B cell (primary cell): ENCODE measurements at regions of chr11 and their contacts with region 1.

Region 1: DNA sequence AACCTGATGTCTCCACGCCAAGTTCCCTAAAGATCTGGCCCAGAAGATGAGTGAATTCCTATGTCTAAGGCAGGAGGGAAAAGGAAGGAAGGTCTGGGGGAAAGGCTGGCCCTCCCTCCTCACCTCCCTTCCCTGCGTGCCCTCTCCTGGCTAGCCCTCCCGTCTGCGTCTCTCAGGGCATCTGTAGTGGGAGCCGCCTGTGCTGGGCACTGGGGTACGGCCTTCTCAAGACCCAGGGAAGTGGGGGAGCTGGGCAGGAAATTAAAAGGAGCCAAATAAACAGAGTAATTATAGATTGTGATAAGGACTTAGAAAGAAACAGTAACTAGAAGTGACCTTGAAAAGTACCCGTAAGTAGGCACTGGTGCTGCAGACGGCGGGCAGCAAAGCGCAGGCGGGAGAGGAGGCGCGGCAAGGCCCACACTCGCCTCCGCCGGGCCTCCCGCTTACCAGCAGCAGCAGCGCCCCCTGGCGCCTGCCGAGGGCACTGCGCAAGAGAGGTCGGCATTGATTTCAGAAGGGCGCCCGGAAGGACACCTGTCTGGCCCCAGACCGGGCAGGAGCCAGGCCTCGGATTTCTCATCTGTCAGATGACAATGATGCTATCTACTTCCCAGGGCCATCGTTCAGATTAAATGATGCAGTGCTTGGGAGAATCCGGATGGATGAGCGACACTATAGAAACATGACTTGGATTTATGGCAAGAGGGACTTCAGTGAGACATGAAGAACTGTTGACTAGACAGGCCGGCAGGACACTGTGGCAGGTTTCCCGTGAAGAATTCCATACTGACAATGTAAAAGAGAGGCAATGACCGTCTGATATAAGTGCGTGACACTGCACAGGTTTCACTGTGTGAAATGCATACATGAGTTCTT is 7.3 kb downstream of the KCNJ1 start:
- DNase-seq: peak; percentile 87
- ATAC-seq: peak; percentile 99
- H3K4me3 ChIP-seq: no peak overlapping the region
- H3K4me3 Mint-ChIP-seq: no peak overlapping the region
- H3K27ac ChIP-seq: no peak overlapping the region
- H3K27ac Mint-ChIP-seq: peak overlapping the region; percentile 59
- H3K4me1 ChIP-seq: peaks cover 9 to 17% of the 10 kb centered on the region in 2 donors
- H3K4me1 Mint-ChIP-seq: peaks cover 21% of the 10 kb centered on the region
- H3K27me3 ChIP-seq: no peaks in the 10 kb centered on the region
- H3K27me3 Mint-ChIP-seq: peaks cover 3% of the 10 kb centered on the region
- CTCF ChIP-seq: peak; percentile 100

Region 2: DNA sequence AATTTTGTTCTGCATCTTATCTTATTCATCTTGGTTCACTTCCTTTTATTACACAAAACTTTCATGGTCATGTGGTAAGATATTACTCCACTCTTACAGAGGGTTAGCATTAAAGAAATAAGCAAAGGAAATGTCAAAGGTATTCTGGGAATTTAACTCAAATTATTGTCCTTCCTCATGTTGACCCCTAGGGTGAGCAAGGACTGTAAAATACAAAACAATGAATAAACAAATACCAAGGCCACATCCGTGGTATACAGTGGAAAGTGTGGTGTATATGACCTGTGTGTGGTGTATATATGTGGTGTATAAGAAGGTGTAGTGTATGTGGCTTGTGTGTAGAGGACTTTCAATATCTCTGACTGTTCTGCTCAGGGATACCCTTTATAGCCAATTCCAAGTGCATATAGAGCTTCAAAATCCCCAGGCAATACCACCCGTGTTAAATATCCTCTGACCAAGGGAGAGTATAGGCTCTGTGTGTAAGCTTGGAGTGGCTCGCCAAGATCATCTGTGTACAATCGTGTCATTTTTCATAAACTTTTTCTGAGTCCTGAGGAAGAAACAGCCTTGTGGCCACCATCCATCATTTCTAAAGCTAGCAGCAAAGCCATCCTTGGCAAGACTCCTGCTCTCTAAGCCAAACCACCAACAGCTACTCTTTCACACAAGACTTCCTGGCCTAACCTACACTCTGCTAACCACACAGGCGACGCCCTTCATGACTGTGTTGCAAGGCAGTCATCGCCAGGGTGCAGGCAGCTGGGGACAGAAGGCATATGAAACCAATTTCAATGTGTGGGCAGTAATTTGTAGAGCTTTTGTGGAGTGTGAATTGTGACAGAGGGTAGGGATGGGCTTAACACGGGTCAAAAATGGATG is 820.4 kb before region 1 on chr11:
- CTCF ChIA-PET with region 1: no interaction called
- POLR2A ChIA-PET with region 1: no interaction called
- intact Hi-C with region 1: loop called (anchors 10 kb)
- DNase-seq: peak; percentile 43
- ATAC-seq: peak; percentile 66
- H3K4me3 ChIP-seq: no peak overlapping the region
- H3K4me3 Mint-ChIP-seq: no peak overlapping the region
- H3K27ac ChIP-seq: no peak overlapping the region
- H3K27ac Mint-ChIP-seq: no peak overlapping the region
- H3K4me1 ChIP-seq: peaks cover 19 to 20% of the 10 kb centered on the region in 2 donors
- H3K4me1 Mint-ChIP-seq: peaks cover 17% of the 10 kb centered on the region
- H3K27me3 ChIP-seq: peaks cover 0 to 9% (median 4%) of the 10 kb centered on the region in 4 experiments
- H3K27me3 Mint-ChIP-seq: peaks cover 16% of the 10 kb centered on the region
- CTCF ChIP-seq: no peak

Region 3: GRCh38 chr11:128874427-128874826 is 14.6 kb after region 1 on chr11:
- CTCF ChIA-PET with region 1: no interaction called
- POLR2A ChIA-PET with region 1: no interaction called
- intact Hi-C with region 1: no loop called
- DNase-seq: no peak
- ATAC-seq: no peak
- H3K4me3 ChIP-seq: no peak overlapping the region
- H3K4me3 Mint-ChIP-seq: no peak overlapping the region
- H3K27ac ChIP-seq: no peak overlapping the region
- H3K27ac Mint-ChIP-seq: no peak overlapping the region
- H3K4me1 ChIP-seq: no peaks in the 10 kb centered on the region
- H3K4me1 Mint-ChIP-seq: no peaks in the 10 kb centered on the region
- H3K27me3 ChIP-seq: peaks cover 0 to 17% (median 0%) of the 10 kb centered on the region in 4 experiments
- H3K27me3 Mint-ChIP-seq: peaks cover 53% of the 10 kb centered on the region
- CTCF ChIP-seq: no peak